Common myeloid progenitor, CD34-positive (primary cell): ENCODE measurements at regions of chr12 and their contacts with region 1.

Region 1: GRCh38 chr12:57621497-57622292 is 10.5 kb downstream of the ARHGEF25 start:
- DNase-seq: peak; percentile 40 to 62 (median 56)
- H3K4me3 ChIP-seq: peak overlapping the region in 5 of 7 experiments; percentile 35 to 68 (median 61)
- H3K27ac ChIP-seq: no peak overlapping the region
- H3K4me1 ChIP-seq: peaks cover 0 to 26% (median 19%) of the 10 kb centered on the region in 4 experiments
- H3K27me3 ChIP-seq: peaks cover 5 to 99% (median 51%) of the 10 kb centered on the region in 5 experiments

Region 2: GRCh38 chr12:57590536-57591479 is 30.9 kb before region 1 on chr12 and contains the start of gene PIP4K2C:
- CTCF ChIA-PET with region 1: interaction called, 121 read pairs
- POLR2A ChIA-PET with region 1: no interaction called
- DNase-seq: peak; percentile 36 to 53 (median 42)
- H3K4me3 ChIP-seq: peak within 1 kb of the TSS; percentile 64 to 91 (median 84)
- H3K27ac ChIP-seq: peak within 1 kb of the TSS in 1 of 2 experiments; percentile 66
- H3K4me1 ChIP-seq: peaks cover 5 to 22% (median 14%) of the 10 kb centered on the region in 4 experiments
- H3K27me3 ChIP-seq: peaks cover 0 to 6% (median 4%) of the 10 kb centered on the region in 5 experiments

Region 3: GRCh38 chr12:57604454-57604991 is 17.2 kb before region 1 on chr12 and contains the start of gene DTX3:
- CTCF ChIA-PET with region 1: interaction called, 35 read pairs
- POLR2A ChIA-PET with region 1: no interaction called
- DNase-seq: peak; percentile 47 to 71 (median 55)
- H3K4me3 ChIP-seq: peak within 1 kb of the TSS; percentile 55 to 87 (median 72)
- H3K27ac ChIP-seq: peak within 1 kb of the TSS; percentile 48 to 67
- H3K4me1 ChIP-seq: peaks cover 0 to 21% (median 6%) of the 10 kb centered on the region in 4 experiments
- H3K27me3 ChIP-seq: peaks cover 0 to 11% (median 0%) of the 10 kb centered on the region in 5 experiments

Region 4: DNA sequence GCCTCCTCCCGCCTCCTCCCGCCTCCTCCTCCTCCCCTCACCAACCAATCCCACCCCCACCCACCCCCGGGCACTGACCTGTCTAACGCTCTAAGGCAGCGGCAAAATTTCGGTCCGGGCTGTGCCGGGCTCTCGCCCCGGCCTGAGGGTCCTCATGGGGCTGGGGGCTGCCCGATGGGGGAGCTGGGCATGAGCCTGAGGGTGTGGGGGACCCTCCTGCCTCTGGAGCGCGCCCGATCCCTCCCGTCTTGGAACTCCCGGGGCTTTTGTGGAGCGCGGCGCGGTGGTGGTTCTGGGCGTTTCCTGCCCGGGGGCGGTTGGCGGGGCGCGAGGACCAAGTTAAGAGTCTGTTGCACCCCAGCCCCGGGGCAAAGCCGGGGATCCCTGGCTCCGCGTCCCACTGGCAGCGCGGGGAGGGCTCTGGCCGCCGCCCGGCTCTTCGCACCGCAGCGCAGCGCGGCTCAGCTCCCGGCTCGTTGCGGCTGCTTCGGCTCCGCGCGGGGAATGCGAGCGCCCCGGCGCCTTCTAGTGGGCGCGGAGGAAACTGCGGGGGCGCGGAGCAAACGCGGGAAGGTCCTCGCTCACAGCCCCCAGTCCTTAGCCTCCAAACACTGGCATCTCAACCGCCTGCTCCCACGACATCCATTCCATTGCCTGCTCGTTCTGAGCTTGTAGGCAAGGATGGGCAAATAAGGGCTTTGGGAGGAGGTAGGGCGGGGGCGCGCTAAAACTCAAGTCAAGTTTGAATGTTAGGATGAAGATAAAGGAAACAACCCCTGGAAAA is 11.2 kb after region 1 on chr12 and contains the start of gene B4GALNT1:
- CTCF ChIA-PET with region 1: interaction called, 34 read pairs
- POLR2A ChIA-PET with region 1: interaction called, 3 read pairs
- DNase-seq: peak; percentile 59 to 72 (median 70)
- H3K4me3 ChIP-seq: peak within 1 kb of the TSS in 6 of 7 experiments; percentile 31 to 73 (median 53)
- H3K27ac ChIP-seq: no peak within 1 kb of the TSS
- H3K4me1 ChIP-seq: peaks cover 0 to 25% (median 20%) of the 10 kb centered on the region in 4 experiments
- H3K27me3 ChIP-seq: peaks cover 0 to 60% (median 36%) of the 10 kb centered on the region in 5 experiments

Region 5: GRCh38 chr12:57655541-57656240 is 34.0 kb after region 1 on chr12:
- CTCF ChIA-PET with region 1: no interaction called
- POLR2A ChIA-PET with region 1: no interaction called
- DNase-seq: no peak
- H3K4me3 ChIP-seq: no peak overlapping the region
- H3K27ac ChIP-seq: no peak overlapping the region
- H3K4me1 ChIP-seq: no peaks in the 10 kb centered on the region
- H3K27me3 ChIP-seq: no peaks in the 10 kb centered on the region

Region 6: GRCh38 chr12:57852620-57853500 is 231.2 kb after region 1 on chr12:
- CTCF ChIA-PET with region 1: no interaction called
- POLR2A ChIA-PET with region 1: no interaction called
- DNase-seq: peak in 1 of 3 donors; percentile 45
- H3K4me3 ChIP-seq: peak overlapping the region; percentile 20 to 76 (median 48)
- H3K27ac ChIP-seq: no peak overlapping the region
- H3K4me1 ChIP-seq: peaks cover 7 to 43% (median 36%) of the 10 kb centered on the region in 4 experiments
- H3K27me3 ChIP-seq: no peaks in the 10 kb centered on the region